Breast epithelium (tissue), 4 donors: ENCODE measurements at regions of chr6 and their contacts with region 1.

Region 1: GRCh38 chr6:15709651-15710269 is 46.9 kb upstream of the DTNBP1 start:
- DNase-seq: no peak
- H3K4me3 ChIP-seq: no peak overlapping the region
- H3K27ac ChIP-seq: no peak overlapping the region
- H3K4me1 ChIP-seq: no peaks in the 10 kb centered on the region
- H3K27me3 ChIP-seq: no peaks in the 10 kb centered on the region
- CTCF ChIP-seq: no peak
- POLR2A ChIP-seq: no peak

Region 2: DNA sequence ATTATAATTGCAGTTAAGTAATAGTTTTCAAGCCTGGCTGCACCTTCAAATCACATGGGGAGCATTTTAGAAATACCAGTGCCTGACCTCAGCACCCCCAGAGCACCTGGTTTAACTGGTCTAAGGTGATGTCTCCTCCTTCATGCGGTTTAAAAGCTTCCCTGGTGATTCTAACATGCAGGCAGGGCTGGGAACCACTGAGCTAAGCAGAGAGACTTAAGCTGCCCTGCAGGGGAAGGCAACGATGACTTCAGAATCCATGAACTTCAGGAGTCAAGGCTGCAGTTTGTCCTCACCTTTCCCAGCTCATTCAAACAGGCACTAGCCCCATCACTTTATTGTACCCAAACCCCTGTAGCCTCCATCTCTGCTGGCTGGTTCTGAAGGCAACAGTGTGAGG is 40.8 kb before region 1 on chr6:
- intact Hi-C with region 1: loop called (anchors 2 kb)
- DNase-seq: no peak
- H3K4me3 ChIP-seq: no peak overlapping the region
- H3K27ac ChIP-seq: no peak overlapping the region
- H3K4me1 ChIP-seq: no peaks in the 10 kb centered on the region
- H3K27me3 ChIP-seq: no peaks in the 10 kb centered on the region
- CTCF ChIP-seq: no peak
- POLR2A ChIP-seq: no peak